K562 (cell line): ENCODE measurements at regions of chr15 and their contacts with region 1.

Region 1: GRCh38 chr15:76299786-76300185 is 11.5 kb downstream of the ETFA start:
- DNase-seq: no peak
- ATAC-seq: no peak; the same call in 2 of the 3 replicates
- H3K4me3 ChIP-seq: no peak overlapping the region
- H3K27ac ChIP-seq: no peak overlapping the region
- H3K4me1 ChIP-seq: peaks cover 0 to 2% of the 10 kb centered on the region in 2 experiments; a peak in 2 of 5 replicates
- H3K27me3 ChIP-seq: no peaks in the 10 kb centered on the region
- CTCF ChIP-seq: no peak
- EP300 ChIP-seq: no peak
- POLR2A ChIP-seq: no peak
- RAD21 ChIP-seq: no peak

Region 2: DNA sequence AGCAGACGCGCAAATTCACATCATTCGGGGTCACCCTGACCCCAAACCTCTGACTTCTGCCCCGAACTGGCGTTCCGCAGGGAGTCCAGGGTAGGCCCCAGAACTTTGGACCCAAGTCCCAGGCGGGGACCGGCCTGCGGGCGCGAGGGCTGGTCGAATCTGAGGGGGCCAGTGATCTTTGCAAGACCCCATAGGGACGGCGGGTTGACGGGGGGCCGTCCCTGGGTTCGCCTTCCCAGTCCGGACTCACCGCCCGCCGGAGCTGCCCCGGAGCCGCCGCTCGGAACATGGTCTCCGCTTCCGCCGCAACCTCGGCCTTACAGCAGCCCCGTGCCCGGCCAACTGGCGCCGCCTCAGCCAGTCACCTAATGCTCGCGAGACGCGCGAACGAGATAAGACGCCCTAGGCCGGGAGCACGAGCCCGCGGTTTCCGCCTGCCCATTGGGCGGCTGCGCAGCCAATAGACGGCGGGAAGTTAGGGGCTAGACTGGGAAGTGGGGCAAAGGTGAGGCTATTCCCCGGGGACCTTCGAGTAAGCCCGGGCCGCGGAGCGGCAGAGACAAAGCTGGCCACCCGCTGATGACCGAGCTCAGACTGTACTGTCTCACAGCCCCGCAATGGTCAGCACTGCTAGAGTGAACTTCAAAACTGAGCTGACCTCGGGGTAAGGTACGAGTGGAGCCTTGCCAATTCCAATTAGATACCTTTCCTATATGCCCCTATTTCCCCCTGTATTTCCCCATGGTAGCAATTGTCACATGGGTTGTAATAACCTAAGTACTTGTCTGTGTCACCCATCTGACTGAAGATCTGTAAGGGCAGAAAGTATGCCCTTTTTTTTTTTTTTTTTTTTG is 11.5 kb after region 1 on chr15 and contains the start of gene ETFA:
- CTCF ChIA-PET with region 1: no interaction called
- POLR2A ChIA-PET with region 1: interaction called, 20 read pairs
- in situ Hi-C with region 1: no loop called
- intact Hi-C with region 1: no loop called
- DNase-seq: peak; percentile 97 to 99 (median 98)
- ATAC-seq: peak; percentile 97
- H3K4me3 ChIP-seq: peak within 1 kb of the TSS; percentile 97
- H3K27ac ChIP-seq: peak within 1 kb of the TSS; percentile 96
- H3K4me1 ChIP-seq: peaks cover 28 to 29% of the 10 kb centered on the region in 2 experiments
- H3K27me3 ChIP-seq: no peaks in the 10 kb centered on the region
- CTCF ChIP-seq: no peak; a peak in 1 of 6 replicates
- EP300 ChIP-seq: peak; percentile 15
- POLR2A ChIP-seq: peak; percentile 96
- RAD21 ChIP-seq: no peak
- polyA plus RNA-seq, gene ETFA: 130 to 134 TPM

Region 3: GRCh38 chr15:76626611-76627010 is 326.8 kb after region 1 on chr15:
- CTCF ChIA-PET with region 1: no interaction called
- POLR2A ChIA-PET with region 1: no interaction called
- in situ Hi-C with region 1: no loop called
- intact Hi-C with region 1: no loop called
- DNase-seq: no peak
- ATAC-seq: no peak
- H3K4me3 ChIP-seq: no peak overlapping the region
- H3K27ac ChIP-seq: no peak overlapping the region
- H3K4me1 ChIP-seq: no peaks in the 10 kb centered on the region
- H3K27me3 ChIP-seq: no peaks in the 10 kb centered on the region
- CTCF ChIP-seq: no peak
- EP300 ChIP-seq: no peak
- POLR2A ChIP-seq: no peak
- RAD21 ChIP-seq: no peak